Activated naive CD4-positive, alpha-beta T cell treated with anti-CD3 and anti-CD28 coated beads, Interleukin-2, amount 10 ng/mL, durations not matched to agents 7 days and 5 days (primary cell): ENCODE measurements at regions of chr17 and their contacts with region 1.

Region 1: DNA sequence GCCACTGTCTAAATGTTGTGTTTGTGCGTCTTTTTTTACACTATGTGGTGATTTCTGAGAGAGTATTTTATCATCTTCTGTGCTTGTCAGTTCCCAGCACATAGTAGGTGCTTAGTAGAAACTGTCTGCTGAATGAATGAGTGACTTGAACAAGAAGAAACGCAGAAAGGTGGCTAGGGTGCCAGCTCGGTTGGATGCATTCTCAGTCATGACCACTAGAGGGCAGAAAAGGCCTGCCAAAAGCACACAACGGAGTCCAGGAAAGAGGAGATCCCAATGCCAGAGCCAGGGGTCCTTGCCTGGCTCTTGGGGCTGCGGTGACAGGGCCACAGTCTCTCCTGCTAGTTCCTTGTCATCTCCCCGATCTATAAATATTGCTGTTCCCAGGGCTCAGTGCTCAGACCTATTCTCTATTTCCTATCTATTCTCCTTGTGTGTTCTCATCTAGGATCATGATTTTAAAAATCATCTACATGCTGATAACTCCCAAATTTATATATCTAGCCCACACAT is 57.3 kb upstream of the CCL1 start:
- DNase-seq: peak; percentile 74
- H3K4me3 Mint-ChIP-seq: no peak overlapping the region
- H3K27ac Mint-ChIP-seq: no peak overlapping the region
- H3K4me1 Mint-ChIP-seq: peaks cover 6% of the 10 kb centered on the region
- H3K27me3 Mint-ChIP-seq: peaks cover 61% of the 10 kb centered on the region

Region 2: DNA sequence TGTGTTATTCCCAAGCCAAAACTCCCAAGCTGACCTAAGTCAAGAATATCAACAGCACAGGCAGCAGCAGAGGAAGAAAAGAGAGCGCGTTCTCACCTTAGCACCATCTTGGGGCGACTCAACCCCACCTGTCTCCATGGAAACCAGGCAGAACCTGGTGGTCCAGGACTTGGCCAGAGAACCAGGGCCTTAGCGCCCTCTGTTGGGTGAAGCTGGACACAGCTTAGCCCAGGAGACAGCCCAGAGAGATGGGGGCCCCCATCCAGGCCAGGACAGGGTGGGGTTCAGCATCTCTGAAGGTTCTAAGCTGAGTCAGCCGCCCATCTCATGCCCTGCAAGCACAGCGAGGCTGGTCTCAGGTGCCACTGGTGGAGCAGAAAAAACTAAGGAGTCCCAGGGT is 99.0 kb after region 1 on chr17:
- CTCF ChIA-PET with region 1: interaction called, 18 read pairs
- DNase-seq: peak; percentile 26
- H3K4me3 Mint-ChIP-seq: no peak overlapping the region
- H3K27ac Mint-ChIP-seq: no peak overlapping the region
- H3K4me1 Mint-ChIP-seq: no peaks in the 10 kb centered on the region
- H3K27me3 Mint-ChIP-seq: peaks cover 16% of the 10 kb centered on the region